ENCODE measurements at regions of chr2 and their contacts with region 1.

Region 1: DNA sequence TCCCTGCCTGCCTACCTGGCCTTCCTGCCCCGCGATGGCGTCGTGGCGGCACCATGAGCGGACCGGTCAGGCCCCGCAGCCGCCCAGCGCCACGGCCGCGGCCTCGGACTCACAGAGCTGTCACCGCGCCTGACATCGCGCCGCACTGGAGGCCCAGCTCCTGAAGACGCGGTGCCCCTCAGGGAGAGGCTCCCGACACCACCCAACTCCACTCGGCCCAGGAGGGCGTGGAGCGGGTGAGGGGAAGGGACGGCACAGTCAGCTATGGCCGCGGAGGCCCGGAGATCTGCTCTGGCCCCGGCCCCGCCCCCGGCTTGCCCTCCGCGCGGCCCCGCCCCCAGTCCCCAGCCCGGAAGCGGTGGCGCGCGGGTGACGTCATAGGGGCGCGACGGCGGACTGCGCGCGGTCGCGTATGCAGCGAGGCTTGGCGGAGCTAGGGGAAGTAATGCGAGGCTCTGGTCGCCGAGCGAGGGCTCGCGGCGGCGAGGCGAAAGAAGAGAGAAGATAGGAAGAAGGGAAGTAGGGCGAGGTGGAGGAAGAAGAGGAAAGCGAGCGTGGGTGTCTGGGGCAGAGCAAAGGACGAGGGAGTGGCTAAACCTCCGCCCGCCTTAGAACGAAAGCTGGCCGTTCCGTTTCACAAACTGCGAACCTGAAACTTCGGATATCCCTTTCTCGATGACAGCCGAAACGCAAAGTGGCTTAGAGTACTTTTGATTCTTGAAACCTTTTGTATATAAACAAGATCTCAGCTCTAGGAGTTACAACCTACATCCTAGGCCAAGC is at the start of gene SLC35F5:
- DNase-seq: peak; percentile 70
- ATAC-seq: peak; percentile 94
- H3K4me3 ChIP-seq: peak within 1 kb of the TSS; percentile 97
- H3K27ac ChIP-seq: peak within 1 kb of the TSS; percentile 90
- H3K4me1 ChIP-seq: no peaks in the 10 kb centered on the region
- H3K27me3 ChIP-seq: no peaks in the 10 kb centered on the region
- CTCF ChIP-seq: no peak
- EP300 ChIP-seq: 0 out of 4 replicates have a peak, but pooled peaks of 1 of the 2 experiments have one; percentile 26
- POLR2A ChIP-seq: peak; percentile 98
- RAD21 ChIP-seq: peak; percentile 23; the same call in 1 of the 2 replicates
- polyA plus RNA-seq, gene SLC35F5: 1.8 to 5.0 TPM

Region 2: DNA sequence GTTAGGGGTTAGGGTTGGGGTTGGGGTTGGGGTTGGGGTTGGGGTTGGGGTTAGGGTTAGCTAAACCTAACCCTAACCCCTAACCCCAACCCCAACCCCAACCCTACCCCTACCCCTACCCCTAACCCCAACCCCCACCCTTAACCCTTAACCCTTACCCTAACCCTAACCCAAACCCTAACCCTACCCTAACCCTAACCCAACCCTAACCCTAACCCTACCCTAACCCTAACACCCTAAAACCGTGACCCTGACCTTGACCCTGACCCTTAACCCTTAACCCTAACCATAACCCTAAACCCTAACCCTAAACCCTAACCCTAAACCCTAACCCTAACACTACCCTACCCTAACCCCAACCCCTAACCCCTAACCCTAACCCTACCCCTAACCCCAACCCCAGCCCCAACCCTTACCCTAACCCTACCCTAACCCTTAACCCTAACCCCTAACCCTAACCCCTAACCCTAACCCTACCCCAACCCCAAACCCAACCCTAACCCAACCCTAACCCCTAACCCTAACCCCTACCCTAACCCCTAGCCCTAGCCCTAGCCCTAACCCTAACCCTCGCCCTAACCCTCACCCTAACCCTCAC is 153.6 kb before region 1 on chr2:
- CTCF ChIA-PET with region 1: interaction called, 10 read pairs
- POLR2A ChIA-PET with region 1: no interaction called
- RAD21 ChIA-PET with region 1: no interaction called
- SMC1A ChIA-PET with region 1: no interaction called
- in situ Hi-C with region 1: no loop called
- intact Hi-C with region 1: no loop called
- DNase-seq: no peak
- ATAC-seq: peak; percentile 86
- H3K4me3 ChIP-seq: peak overlapping the region; percentile 70; the same call in 1 of the 2 replicates
- H3K27ac ChIP-seq: peak overlapping the region; percentile 44; the same call in 1 of the 2 replicates
- H3K4me1 ChIP-seq: no peaks in the 10 kb centered on the region
- H3K27me3 ChIP-seq: no peaks in the 10 kb centered on the region
- CTCF ChIP-seq: no peak
- EP300 ChIP-seq: no peak
- POLR2A ChIP-seq: no peak
- RAD21 ChIP-seq: no peak

Region 3: DNA sequence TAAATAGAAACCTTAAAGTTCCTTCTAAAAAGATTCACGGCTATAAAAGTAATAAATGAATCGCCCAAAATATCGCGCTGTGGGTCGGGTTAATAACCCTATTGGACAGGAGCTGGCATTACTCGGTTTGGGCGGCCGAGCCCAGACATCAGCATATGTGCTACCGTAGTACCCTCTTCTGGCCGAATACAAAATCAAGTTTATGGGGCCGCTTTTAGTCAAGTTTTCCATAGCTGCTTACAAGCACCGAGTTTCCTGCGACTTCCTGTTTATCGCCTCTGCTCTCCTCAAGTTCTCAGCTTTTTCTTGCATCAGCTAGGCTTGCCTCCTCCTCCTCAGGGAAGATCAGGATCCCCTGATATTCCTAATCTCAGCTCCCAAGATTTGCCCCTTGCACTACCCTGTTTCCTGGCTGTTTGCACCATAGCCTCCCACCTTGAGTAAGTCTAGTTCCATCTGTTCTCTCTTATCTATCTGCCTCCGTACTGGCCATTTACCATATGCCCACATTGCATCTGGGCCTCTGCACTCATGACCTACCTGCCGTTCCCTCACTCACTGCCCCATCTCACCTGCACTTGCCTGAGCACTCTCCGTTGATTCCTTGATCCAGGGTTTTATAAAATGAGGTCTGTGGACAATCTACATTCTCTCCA is 56.2 kb before region 1 on chr2:
- CTCF ChIA-PET with region 1: interaction called, 6 read pairs
- POLR2A ChIA-PET with region 1: interaction called, 3 read pairs
- RAD21 ChIA-PET with region 1: interaction called, 19 read pairs
- SMC1A ChIA-PET with region 1: interaction called, 9 read pairs
- in situ Hi-C with region 1: no loop called
- intact Hi-C with region 1: no loop called
- DNase-seq: peak; percentile 51
- ATAC-seq: peak; percentile 93
- H3K4me3 ChIP-seq: peak overlapping the region; percentile 60
- H3K27ac ChIP-seq: peak overlapping the region; percentile 71; the same call in 1 of the 2 replicates
- H3K4me1 ChIP-seq: peaks cover 17% of the 10 kb centered on the region
- H3K27me3 ChIP-seq: no peaks in the 10 kb centered on the region
- CTCF ChIP-seq: peak; percentile 50 to 79 (median 62); a peak in 5 of 6 replicates
- EP300 ChIP-seq: no peak
- POLR2A ChIP-seq: no peak
- RAD21 ChIP-seq: peak; percentile 90

Region 4: DNA sequence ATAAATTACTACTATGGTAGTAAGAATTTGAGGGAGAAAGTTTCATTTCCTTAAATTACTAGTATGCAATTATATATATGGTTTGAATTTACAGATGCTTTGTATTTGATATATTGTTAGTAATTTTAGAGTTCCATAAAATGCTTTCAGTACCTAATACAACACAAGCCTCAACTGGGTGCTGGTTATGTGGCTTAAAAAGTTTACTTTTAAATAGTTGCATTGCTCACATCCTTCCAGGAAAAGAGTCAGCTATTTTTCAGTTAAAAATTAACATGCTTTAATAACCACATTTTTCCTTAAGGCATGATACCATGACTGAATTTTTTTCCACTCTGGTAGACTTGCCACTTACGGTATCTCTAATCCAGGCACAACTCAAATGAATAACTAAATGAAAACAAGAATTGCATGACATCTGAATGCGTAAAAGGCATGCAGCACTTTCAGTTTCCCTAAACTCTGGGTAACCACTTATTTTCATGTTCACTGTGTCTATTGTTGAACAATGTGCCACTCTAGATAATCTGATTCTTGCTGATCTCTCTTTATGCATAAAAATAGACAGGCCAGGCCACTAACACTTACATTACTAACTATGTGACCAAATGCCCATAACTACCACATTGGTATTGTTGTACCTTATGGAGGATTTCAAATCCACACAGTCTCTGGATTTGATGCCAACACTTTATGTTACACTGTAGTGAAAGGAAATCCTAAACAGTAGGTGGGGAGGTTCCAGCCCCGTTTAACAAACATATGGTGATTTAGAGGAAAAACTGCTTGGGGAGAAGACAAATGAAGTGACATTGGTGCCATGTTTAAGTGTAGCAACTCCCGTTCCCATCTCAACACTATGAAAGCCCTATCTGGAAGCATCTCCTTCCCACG is 35.4 kb after region 1 on chr2:
- CTCF ChIA-PET with region 1: no interaction called
- POLR2A ChIA-PET with region 1: no interaction called
- RAD21 ChIA-PET with region 1: interaction called, 4 read pairs
- SMC1A ChIA-PET with region 1: interaction called, 6 read pairs
- in situ Hi-C with region 1: no loop called
- intact Hi-C with region 1: loop called (anchors 2 kb)
- DNase-seq: peak; percentile 61
- ATAC-seq: peak; percentile 96
- H3K4me3 ChIP-seq: no peak overlapping the region
- H3K27ac ChIP-seq: no peak overlapping the region
- H3K4me1 ChIP-seq: peaks cover 10% of the 10 kb centered on the region
- H3K27me3 ChIP-seq: no peaks in the 10 kb centered on the region
- CTCF ChIP-seq: no peak
- EP300 ChIP-seq: peak; percentile 90 to 94; a peak in 3 of 4 replicates
- POLR2A ChIP-seq: no peak
- RAD21 ChIP-seq: no peak

Region 5: DNA sequence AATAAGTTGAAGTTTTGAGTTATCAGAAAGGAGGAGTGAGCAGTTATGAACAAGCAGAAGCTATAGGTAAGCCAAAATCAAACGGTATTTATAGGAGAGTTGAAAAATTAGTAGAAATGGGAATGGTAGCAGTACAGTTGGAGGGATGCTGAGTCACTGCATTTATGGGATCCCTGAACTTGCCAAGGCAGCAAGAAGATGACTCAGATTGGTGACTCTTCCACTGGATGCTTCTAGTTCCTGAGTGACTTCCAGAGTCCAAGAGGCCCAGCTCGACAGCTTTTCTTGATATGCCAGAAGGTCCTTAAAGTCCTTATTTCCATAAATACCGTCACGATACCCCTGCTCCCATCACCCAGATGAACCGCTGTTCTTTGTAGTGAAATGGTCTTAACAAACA is 102.2 kb after region 1 on chr2:
- CTCF ChIA-PET with region 1: interaction called, 3 read pairs
- POLR2A ChIA-PET with region 1: interaction called, 7 read pairs
- RAD21 ChIA-PET with region 1: interaction called, 3 read pairs
- SMC1A ChIA-PET with region 1: no interaction called
- in situ Hi-C with region 1: no loop called
- intact Hi-C with region 1: loop called (anchors 5 kb)
- DNase-seq: no peak
- ATAC-seq: no peak
- H3K4me3 ChIP-seq: no peak overlapping the region
- H3K27ac ChIP-seq: no peak overlapping the region; the same call in 1 of the 2 replicates
- H3K4me1 ChIP-seq: peaks cover 43% of the 10 kb centered on the region
- H3K27me3 ChIP-seq: no peaks in the 10 kb centered on the region
- CTCF ChIP-seq: no peak
- EP300 ChIP-seq: no peak
- POLR2A ChIP-seq: no peak
- RAD21 ChIP-seq: no peak

Region 6: GRCh38 chr2:113896791-113897190 is 140.2 kb after region 1 on chr2:
- CTCF ChIA-PET with region 1: interaction called, 5 read pairs
- POLR2A ChIA-PET with region 1: interaction called, 5 read pairs
- RAD21 ChIA-PET with region 1: interaction called, 5 read pairs
- SMC1A ChIA-PET with region 1: interaction called, 10 read pairs
- in situ Hi-C with region 1: no loop called
- intact Hi-C with region 1: no loop called
- DNase-seq: no peak
- ATAC-seq: no peak
- H3K4me3 ChIP-seq: peak overlapping the region; percentile 89
- H3K27ac ChIP-seq: no peak overlapping the region
- H3K4me1 ChIP-seq: peaks cover 24% of the 10 kb centered on the region
- H3K27me3 ChIP-seq: no peaks in the 10 kb centered on the region
- CTCF ChIP-seq: no peak
- EP300 ChIP-seq: no peak
- POLR2A ChIP-seq: no peak
- RAD21 ChIP-seq: no peak

Region 7: GRCh38 chr2:113977660-113978523 is 221.3 kb after region 1 on chr2:
- CTCF ChIA-PET with region 1: interaction called, 4 read pairs
- POLR2A ChIA-PET with region 1: no interaction called
- RAD21 ChIA-PET with region 1: no interaction called
- SMC1A ChIA-PET with region 1: no interaction called
- in situ Hi-C with region 1: no loop called
- intact Hi-C with region 1: loop called (anchors 10 kb)
- DNase-seq: no peak
- ATAC-seq: peak; percentile 18
- H3K4me3 ChIP-seq: no peak overlapping the region
- H3K27ac ChIP-seq: no peak overlapping the region
- H3K4me1 ChIP-seq: no peaks in the 10 kb centered on the region
- H3K27me3 ChIP-seq: no peaks in the 10 kb centered on the region
- CTCF ChIP-seq: peak in 1 of 3 experiments; percentile 12; a peak in 1 of 6 replicates
- EP300 ChIP-seq: no peak
- POLR2A ChIP-seq: no peak; the same call in 1 of the 2 replicates
- RAD21 ChIP-seq: no peak

Measured in GM12878 (cell line).